ENCODE measurements at regions of chr1 and their contacts with region 1.

Region 1: DNA sequence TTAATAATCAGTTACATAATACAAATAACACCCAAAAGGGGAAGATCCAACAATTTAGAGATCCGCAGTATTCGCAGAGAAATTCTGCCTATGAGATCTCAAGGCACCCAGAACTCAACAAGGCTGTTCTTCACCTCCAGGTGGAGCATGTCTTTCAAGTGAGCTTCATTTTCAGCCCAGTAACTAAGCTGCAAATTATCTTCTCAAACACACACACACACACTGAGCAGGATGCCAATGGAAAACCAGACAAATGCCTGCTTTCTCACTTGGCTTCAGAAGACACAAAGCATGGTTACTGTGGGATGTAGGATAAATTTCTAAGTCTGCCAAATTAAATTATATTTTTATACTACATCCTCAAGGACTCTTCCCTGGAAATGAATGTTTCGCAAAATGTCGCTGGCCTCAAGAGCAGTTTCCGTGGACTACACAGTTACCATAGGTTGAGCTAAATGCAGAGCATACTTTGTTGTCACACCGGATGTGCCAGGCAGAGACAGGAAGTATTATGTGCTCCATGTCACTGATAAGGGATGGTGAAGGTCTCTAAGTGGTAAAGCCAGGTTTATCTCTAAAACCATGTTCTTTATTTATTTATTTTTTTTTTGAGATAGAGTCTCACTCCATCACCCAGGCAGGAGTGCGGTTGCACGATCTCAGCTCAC is 30.3 kb downstream of the UBR4 start:
- DNase-seq: peak; percentile 33
- ATAC-seq: peak; percentile 73
- H3K4me3 ChIP-seq: no peak overlapping the region
- H3K27ac ChIP-seq: no peak overlapping the region
- H3K4me1 ChIP-seq: no peaks in the 10 kb centered on the region
- H3K27me3 ChIP-seq: no peaks in the 10 kb centered on the region
- CTCF ChIP-seq: peak; percentile 50
- EP300 ChIP-seq: no peak
- POLR2A ChIP-seq: no peak
- RAD21 ChIP-seq: no peak

Region 2: GRCh38 chr1:19232526-19232851 is 52.8 kb after region 1 on chr1:
- CTCF ChIA-PET with region 1: no interaction called
- POLR2A ChIA-PET with region 1: no interaction called
- in situ Hi-C with region 1: loop called (anchors 10 kb)
- intact Hi-C with region 1: no loop called
- DNase-seq: peak; percentile 25
- ATAC-seq: peak; percentile 67
- H3K4me3 ChIP-seq: no peak overlapping the region
- H3K27ac ChIP-seq: no peak overlapping the region
- H3K4me1 ChIP-seq: no peaks in the 10 kb centered on the region
- H3K27me3 ChIP-seq: no peaks in the 10 kb centered on the region
- CTCF ChIP-seq: 0 out of 2 replicates have a peak, but pooled peaks have one; percentile 16
- EP300 ChIP-seq: no peak
- POLR2A ChIP-seq: no peak
- RAD21 ChIP-seq: no peak

Region 3: DNA sequence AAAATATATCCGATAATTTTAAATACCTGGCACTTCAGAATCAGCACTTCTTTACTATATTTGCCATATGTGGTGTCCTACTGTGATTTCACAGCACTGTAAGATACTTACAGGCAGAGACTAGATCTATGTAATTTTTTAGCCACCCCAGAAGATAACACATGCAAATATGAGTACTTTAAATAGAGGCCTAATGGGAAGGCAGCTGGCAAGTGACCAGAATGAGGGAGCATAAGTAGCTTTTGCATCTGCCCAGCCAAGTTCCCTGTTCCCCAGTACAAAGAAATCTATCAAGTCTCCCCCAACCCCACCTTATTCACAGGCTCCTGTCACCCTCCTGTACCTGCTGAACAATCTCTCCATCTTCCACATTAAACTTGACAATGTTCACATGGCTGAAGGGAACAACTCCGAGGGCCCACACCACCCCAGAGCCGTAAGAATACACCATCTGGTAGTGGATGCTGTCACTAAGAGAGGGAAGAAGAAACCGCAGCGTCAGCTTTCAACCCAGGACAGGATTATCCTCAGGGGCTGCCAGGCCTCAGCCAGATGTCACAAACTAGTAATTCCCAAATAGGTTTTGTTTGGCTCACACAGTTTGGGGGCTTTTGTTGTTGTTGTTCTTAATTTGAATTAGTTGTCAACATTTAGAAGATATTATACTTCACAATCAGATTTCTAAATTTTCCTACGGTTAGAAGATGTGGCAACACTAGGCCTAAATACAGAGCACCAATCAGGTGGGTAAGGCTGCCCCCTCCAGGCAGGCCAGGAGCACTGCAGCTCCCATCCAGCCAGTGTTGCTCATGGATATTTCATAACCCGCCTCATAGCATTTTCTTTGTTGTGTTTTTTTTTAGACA is 61.2 kb after region 1 on chr1:
- CTCF ChIA-PET with region 1: interaction called, 10 read pairs
- POLR2A ChIA-PET with region 1: no interaction called
- in situ Hi-C with region 1: loop called (anchors 10 kb)
- intact Hi-C with region 1: loop called (anchors 2 kb)
- DNase-seq: peak; percentile 60
- ATAC-seq: peak; percentile 89
- H3K4me3 ChIP-seq: no peak overlapping the region
- H3K27ac ChIP-seq: no peak overlapping the region
- H3K4me1 ChIP-seq: no peaks in the 10 kb centered on the region
- H3K27me3 ChIP-seq: no peaks in the 10 kb centered on the region
- CTCF ChIP-seq: peak; percentile 86
- EP300 ChIP-seq: no peak
- POLR2A ChIP-seq: no peak
- RAD21 ChIP-seq: peak; percentile 78